ENCODE measurements at regions of chr12 and their contacts with region 1.

Region 1: DNA sequence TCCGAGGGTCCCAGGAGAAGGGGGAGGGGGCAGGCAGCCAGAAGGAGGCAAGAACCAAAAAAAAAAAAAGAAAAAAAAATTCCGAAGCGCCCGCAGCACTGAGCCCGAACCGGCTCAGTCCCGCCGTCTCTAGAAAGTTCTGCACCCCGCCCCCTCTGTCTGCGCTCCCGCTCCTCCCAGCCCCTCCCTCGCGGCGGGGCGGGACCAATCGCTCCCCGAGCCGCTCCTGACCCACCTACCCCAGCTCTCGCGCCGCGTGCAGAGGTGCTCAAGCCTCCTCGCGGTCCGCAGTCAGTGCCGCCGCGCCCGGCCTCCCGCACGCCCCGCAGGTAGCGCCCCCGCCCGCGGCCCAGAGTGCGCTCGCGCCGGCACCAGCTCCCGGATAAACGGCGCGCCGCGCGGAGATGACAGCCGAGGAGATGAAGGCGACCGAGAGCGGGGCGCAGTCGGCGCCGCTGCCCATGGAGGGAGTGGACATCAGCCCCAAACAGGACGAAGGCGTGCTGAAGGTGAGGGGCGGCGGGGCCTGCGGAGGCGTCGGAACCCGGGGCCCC is at the start of gene FKBP4:
- DNase-seq: peak; percentile 91
- ATAC-seq: peak; percentile 87
- H3K4me3 Mint-ChIP-seq: peak within 1 kb of the TSS; percentile 78
- H3K27ac Mint-ChIP-seq: peak within 1 kb of the TSS; percentile 79
- H3K4me1 Mint-ChIP-seq: peaks cover 30% of the 10 kb centered on the region
- H3K27me3 Mint-ChIP-seq: peaks cover 5% of the 10 kb centered on the region
- total RNA-seq, gene FKBP4: 91.5 to 102 TPM

Region 2: GRCh38 chr12:2666411-2666810 is 128.4 kb before region 1 on chr12:
- CTCF ChIA-PET with region 1: no interaction called
- POLR2A ChIA-PET with region 1: no interaction called
- DNase-seq: no peak
- ATAC-seq: no peak
- H3K4me3 Mint-ChIP-seq: no peak overlapping the region
- H3K27ac Mint-ChIP-seq: no peak overlapping the region
- H3K4me1 Mint-ChIP-seq: no peaks in the 10 kb centered on the region
- H3K27me3 Mint-ChIP-seq: no peaks in the 10 kb centered on the region

Region 3: DNA sequence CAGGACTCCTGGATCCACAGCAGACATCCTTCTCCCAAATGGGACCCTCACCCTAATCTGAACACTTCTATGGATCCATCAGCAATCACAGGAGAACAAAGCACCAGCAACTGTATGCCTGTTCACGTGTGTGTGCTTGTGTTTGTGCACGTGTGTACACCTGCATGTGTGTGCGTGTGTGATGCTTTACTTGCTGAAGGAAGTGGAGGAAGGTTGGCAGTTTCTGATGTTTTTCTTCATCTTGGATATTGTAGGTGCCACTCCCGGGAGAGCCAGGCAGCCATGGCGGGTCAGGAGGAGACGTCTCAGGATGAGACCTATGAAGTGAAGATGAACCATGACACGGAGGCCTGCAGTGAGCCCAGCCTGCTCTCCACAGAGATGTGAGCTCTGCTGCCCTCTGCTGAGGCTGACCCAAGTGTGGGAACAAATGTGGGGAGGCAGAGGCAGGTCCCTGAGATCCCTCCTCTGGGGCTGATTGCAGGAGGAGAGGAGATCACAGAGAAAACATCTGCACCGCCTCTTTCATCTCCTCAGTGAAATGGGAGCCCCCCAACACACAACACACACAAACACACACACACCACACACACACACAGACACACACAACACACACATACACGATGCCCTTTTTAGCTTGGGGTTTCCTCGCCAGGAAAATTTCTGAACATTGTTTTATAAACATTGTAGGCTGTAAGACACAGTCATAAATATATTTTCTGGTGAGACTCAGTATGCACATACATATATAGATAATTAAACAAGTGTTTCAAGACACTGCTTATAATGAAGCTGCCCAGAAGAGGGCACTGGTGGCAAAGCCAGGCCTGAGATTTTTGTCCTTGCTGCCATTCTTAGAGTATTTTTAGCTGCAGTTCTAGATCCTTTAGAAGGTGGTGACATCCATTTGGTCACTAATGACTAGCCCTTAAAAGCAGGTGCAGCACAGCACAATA is 112.2 kb before region 1 on chr12:
- CTCF ChIA-PET with region 1: interaction called, 12 read pairs
- POLR2A ChIA-PET with region 1: no interaction called
- DNase-seq: peak; percentile 74
- ATAC-seq: peak; percentile 75
- H3K4me3 Mint-ChIP-seq: peak overlapping the region; percentile 55
- H3K27ac Mint-ChIP-seq: peak overlapping the region; percentile 87
- H3K4me1 Mint-ChIP-seq: peaks cover 6% of the 10 kb centered on the region
- H3K27me3 Mint-ChIP-seq: no peaks in the 10 kb centered on the region

Region 4: GRCh38 chr12:2691006-2691344 is 103.8 kb before region 1 on chr12:
- CTCF ChIA-PET with region 1: interaction called, 3 read pairs
- POLR2A ChIA-PET with region 1: interaction called, 10 read pairs
- DNase-seq: peak; percentile 79
- ATAC-seq: peak; percentile 76
- H3K4me3 Mint-ChIP-seq: peak overlapping the region; percentile 86
- H3K27ac Mint-ChIP-seq: peak overlapping the region; percentile 93
- H3K4me1 Mint-ChIP-seq: peaks cover 42% of the 10 kb centered on the region
- H3K27me3 Mint-ChIP-seq: peaks cover 10% of the 10 kb centered on the region

Region 5: GRCh38 chr12:2783936-2784600 is 10.7 kb before region 1 on chr12:
- CTCF ChIA-PET with region 1: interaction called, 15 read pairs
- POLR2A ChIA-PET with region 1: interaction called, 3 read pairs
- DNase-seq: peak; percentile 56
- ATAC-seq: peak; percentile 96
- H3K4me3 Mint-ChIP-seq: peak overlapping the region; percentile 48
- H3K27ac Mint-ChIP-seq: no peak overlapping the region
- H3K4me1 Mint-ChIP-seq: peaks cover 10% of the 10 kb centered on the region
- H3K27me3 Mint-ChIP-seq: peaks cover 30% of the 10 kb centered on the region

Region 6: GRCh38 chr12:2812290-2813213 is 17.7 kb after region 1 on chr12 and contains the start of gene ITFG2:
- CTCF ChIA-PET with region 1: interaction called, 6 read pairs
- POLR2A ChIA-PET with region 1: interaction called, 12 read pairs
- DNase-seq: peak; percentile 99
- ATAC-seq: peak; percentile 95
- H3K4me3 Mint-ChIP-seq: peak within 1 kb of the TSS; percentile 98
- H3K27ac Mint-ChIP-seq: peak within 1 kb of the TSS; percentile 99
- H3K4me1 Mint-ChIP-seq: peaks cover 27% of the 10 kb centered on the region
- H3K27me3 Mint-ChIP-seq: no peaks in the 10 kb centered on the region
- total RNA-seq, gene ITFG2: 42.3 to 44.5 TPM

Measured in activated CD8-positive, alpha-beta T cell treated with anti-CD3 and anti-CD28 coated beads, Interleukin-2, amount 10 ng/mL, durations not matched to agents 7 days and 5 days (primary cell).